Upper lobe of right lung (tissue), 1 donor: ENCODE measurements at regions of chr12 and their contacts with region 1.

Region 1: GRCh38 chr12:6062757-6063735 is 61.4 kb downstream of the VWF start:
- DNase-seq: peak; percentile 74
- ATAC-seq: peak; percentile 86
- H3K4me3 ChIP-seq: no peak overlapping the region
- H3K27ac ChIP-seq: no peak overlapping the region
- H3K4me1 ChIP-seq: peaks cover 10% of the 10 kb centered on the region
- H3K27me3 ChIP-seq: no peaks in the 10 kb centered on the region
- CTCF ChIP-seq: peak; percentile 90

Region 2: DNA sequence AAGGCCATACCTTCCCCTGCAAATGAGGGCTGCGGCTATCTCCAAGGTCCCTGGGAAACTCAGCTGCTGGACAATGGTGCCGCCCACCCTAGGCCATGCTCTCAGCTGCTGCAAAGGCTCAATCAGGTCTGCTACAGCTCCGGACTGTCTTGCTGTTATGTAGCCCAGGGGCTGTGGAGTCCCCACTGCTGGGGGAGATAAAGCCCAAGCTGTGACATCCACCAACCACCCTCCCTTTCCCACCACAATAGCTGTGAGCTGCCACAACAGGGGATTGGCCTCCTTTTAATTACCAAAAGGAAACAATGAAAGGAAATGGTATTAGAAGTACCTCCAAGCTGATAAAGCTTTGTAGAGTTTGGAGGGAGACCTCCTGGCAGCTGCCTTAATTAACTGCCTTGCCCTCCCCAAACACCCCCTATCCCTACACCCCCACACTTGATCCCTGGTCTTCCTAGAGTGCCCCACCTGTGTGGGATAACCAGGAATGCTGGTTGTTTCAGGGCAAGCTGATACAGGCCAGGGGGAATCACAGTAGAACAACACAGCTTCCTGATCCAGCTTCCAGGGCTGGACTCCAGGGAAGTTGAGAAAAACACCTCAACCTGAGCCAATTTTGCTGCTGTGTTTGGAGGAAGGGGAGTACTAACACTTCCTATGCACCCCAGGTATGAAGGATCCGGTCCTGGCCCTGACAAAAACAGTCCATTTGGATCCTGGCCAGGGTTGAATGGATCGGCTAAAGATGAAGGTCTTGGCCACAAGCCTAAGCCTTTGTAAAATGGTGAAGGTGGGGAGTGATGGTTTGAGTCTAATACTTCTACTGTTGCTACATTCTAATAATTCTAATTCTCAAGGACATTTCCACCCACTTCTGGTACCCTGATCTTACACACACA is 61.6 kb after region 1 on chr12 and contains the start of gene VWF:
- intact Hi-C with region 1: loop called (anchors 10 kb)
- DNase-seq: no peak
- ATAC-seq: peak; percentile 54
- H3K4me3 ChIP-seq: peak within 1 kb of the TSS; percentile 43
- H3K27ac ChIP-seq: peak within 1 kb of the TSS; percentile 80
- H3K4me1 ChIP-seq: no peaks in the 10 kb centered on the region
- H3K27me3 ChIP-seq: no peaks in the 10 kb centered on the region
- CTCF ChIP-seq: no peak
- total RNA-seq, gene VWF: 729 TPM

Region 3: DNA sequence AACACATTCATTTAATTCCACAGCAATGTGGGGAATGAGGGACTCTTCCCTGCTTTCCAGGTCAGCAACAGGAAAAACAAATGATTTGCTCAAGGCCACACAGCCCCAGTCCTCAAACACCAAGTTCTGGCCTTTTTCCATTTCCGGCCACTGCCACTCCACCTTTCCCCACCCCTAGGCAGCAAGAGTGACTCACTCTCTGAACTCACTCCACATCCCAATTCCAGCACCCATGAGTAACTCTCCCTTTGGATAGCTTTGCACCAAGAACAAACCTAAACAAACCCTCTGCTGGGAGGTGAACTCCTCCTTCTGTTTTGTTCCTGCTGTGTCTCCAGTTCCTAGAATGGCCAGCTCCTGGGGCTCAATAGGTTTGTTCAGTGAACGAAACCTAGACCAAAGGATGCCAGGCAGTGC is 217.0 kb after region 1 on chr12:
- intact Hi-C with region 1: loop called (anchors 5 kb)
- DNase-seq: peak; percentile 79
- ATAC-seq: peak; percentile 49
- H3K4me3 ChIP-seq: no peak overlapping the region
- H3K27ac ChIP-seq: peak overlapping the region; percentile 95
- H3K4me1 ChIP-seq: peaks cover 26% of the 10 kb centered on the region
- H3K27me3 ChIP-seq: no peaks in the 10 kb centered on the region
- CTCF ChIP-seq: no peak